Activated CD4-positive, alpha-beta memory T cell treated with anti-CD3 and anti-CD28 coated beads for 36 hours (primary cell): ENCODE measurements at regions of chr10 and their contacts with region 1.

Region 1: GRCh38 chr10:8990280-8990987 is 935.9 kb downstream of the GATA3 start:
- DNase-seq: no peak
- H3K4me3 Mint-ChIP-seq: no peak overlapping the region
- H3K27ac Mint-ChIP-seq: peak overlapping the region; percentile 35
- H3K4me1 Mint-ChIP-seq: peaks cover 55% of the 10 kb centered on the region
- H3K27me3 Mint-ChIP-seq: no peaks in the 10 kb centered on the region

Region 2: GRCh38 chr10:8898745-8899325 is 91.6 kb before region 1 on chr10:
- CTCF ChIA-PET with region 1: no interaction called
- POLR2A ChIA-PET with region 1: no interaction called
- intact Hi-C with region 1: loop called (anchors 5 kb)
- DNase-seq: no peak
- H3K4me3 Mint-ChIP-seq: peak overlapping the region; percentile 4
- H3K27ac Mint-ChIP-seq: peak overlapping the region; percentile 57
- H3K4me1 Mint-ChIP-seq: peaks cover 4% of the 10 kb centered on the region
- H3K27me3 Mint-ChIP-seq: peaks cover 9% of the 10 kb centered on the region

Region 3: GRCh38 chr10:9004736-9005135 is 14.3 kb after region 1 on chr10:
- CTCF ChIA-PET with region 1: interaction called, 3 read pairs
- POLR2A ChIA-PET with region 1: no interaction called
- intact Hi-C with region 1: loop called (anchors 2 kb)
- DNase-seq: no peak
- H3K4me3 Mint-ChIP-seq: peak overlapping the region; percentile 47
- H3K27ac Mint-ChIP-seq: peak overlapping the region; percentile 61
- H3K4me1 Mint-ChIP-seq: peaks cover 51% of the 10 kb centered on the region
- H3K27me3 Mint-ChIP-seq: no peaks in the 10 kb centered on the region

Region 4: GRCh38 chr10:9018195-9019173 is 28.1 kb after region 1 on chr10:
- CTCF ChIA-PET with region 1: interaction called, 3 read pairs
- POLR2A ChIA-PET with region 1: no interaction called
- intact Hi-C with region 1: loop called (anchors 1 kb)
- DNase-seq: no peak
- H3K4me3 Mint-ChIP-seq: peak overlapping the region; percentile 36
- H3K27ac Mint-ChIP-seq: peak overlapping the region; percentile 76
- H3K4me1 Mint-ChIP-seq: peaks cover 41% of the 10 kb centered on the region
- H3K27me3 Mint-ChIP-seq: peaks cover 10% of the 10 kb centered on the region

Region 5: GRCh38 chr10:9091530-9092093 is 101.2 kb after region 1 on chr10:
- CTCF ChIA-PET with region 1: no interaction called
- POLR2A ChIA-PET with region 1: no interaction called
- intact Hi-C with region 1: loop called (anchors 5 kb)
- DNase-seq: peak; percentile 48
- H3K4me3 Mint-ChIP-seq: no peak overlapping the region
- H3K27ac Mint-ChIP-seq: peak overlapping the region; percentile 30
- H3K4me1 Mint-ChIP-seq: peaks cover 24% of the 10 kb centered on the region
- H3K27me3 Mint-ChIP-seq: no peaks in the 10 kb centered on the region